GM10248 (cell line): ENCODE measurements at regions of chr2 and their contacts with region 1.

Region 1: GRCh38 chr2:147331790-147332419 is 512.9 kb upstream of the ACVR2A start:
- DNase-seq: peak; percentile 10
- CTCF ChIP-seq: peak; percentile 28

Region 2: GRCh38 chr2:147082850-147083522 is 248.9 kb before region 1 on chr2:
- CTCF ChIA-PET with region 1: interaction called, 75 read pairs
- POLR2A ChIA-PET with region 1: no interaction called
- DNase-seq: peak; percentile 37
- CTCF ChIP-seq: peak; percentile 89

Region 3: DNA sequence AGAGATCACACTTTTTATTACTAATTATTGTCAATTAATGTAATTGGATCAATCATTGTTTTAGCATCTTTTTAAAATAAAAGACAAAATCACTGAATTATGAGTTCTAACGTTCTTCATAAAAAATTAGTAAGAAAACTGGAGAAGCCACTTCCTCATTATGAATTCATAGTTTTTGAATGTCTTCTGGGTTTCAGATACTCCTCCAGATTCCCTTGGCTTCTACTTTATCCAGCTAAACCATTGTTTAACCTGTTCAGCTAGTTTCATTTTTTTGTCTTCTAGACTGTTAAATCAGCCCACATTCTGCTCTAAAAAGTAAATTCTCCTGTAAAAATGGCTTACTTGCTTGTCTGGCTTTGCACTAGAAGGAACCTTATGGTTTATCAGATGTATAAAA is 240.5 kb before region 1 on chr2:
- CTCF ChIA-PET with region 1: interaction called, 17 read pairs
- POLR2A ChIA-PET with region 1: interaction called, 4 read pairs
- DNase-seq: no peak
- CTCF ChIP-seq: no peak

Region 4: GRCh38 chr2:147305496-147305895 is 26.4 kb before region 1 on chr2:
- CTCF ChIA-PET with region 1: interaction called, 13 read pairs
- POLR2A ChIA-PET with region 1: no interaction called
- DNase-seq: no peak
- CTCF ChIP-seq: no peak

Region 5: GRCh38 chr2:147320146-147320545 is 11.8 kb before region 1 on chr2:
- CTCF ChIA-PET with region 1: interaction called, 12 read pairs
- POLR2A ChIA-PET with region 1: no interaction called
- DNase-seq: no peak
- CTCF ChIP-seq: no peak

Region 6: DNA sequence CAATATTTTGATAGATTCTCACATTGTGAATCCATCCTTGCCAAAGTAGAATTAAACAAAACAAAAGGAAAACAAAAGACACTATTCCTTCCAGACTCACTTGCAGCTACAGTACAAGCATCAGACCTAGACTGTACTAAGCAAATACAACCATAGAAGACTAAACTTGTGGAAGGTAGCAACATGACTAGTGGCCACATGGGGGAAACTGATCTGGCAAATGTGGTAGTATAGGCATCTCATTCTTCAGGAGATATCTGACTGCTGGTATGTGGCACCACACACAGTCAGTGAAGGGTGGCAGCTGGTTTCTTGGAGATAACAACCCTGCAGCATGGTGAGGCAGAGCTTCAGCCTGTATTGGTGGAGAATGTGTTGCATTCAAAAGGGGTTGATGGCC is 432.0 kb after region 1 on chr2:
- CTCF ChIA-PET with region 1: no interaction called
- POLR2A ChIA-PET with region 1: no interaction called
- DNase-seq: no peak
- CTCF ChIP-seq: no peak